Right ventricle myocardium superior (tissue), 1 donor: ENCODE measurements at regions of chr3 and their contacts with region 1.

Region 1: DNA sequence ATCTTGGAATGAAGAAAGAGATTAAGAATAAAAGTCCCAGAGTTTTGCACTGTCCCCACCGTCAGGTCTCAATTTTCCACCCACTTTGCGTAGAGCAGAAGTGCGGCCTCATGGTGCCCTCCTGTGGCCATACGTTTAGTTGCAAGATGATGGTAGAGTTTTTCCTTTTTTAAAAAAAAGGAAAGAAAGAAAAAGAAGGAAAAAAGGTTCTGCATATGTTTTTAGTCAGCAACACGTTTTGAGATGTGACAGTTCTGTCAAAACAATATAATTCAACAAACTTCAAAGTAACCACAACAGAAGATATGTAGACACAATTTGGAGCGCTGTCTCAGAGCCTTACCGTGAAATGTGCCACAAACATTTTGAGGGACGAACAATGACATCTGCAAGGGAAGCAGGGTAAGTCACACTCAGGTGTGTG is 24.6 kb downstream of the EBLN2 start:
- DNase-seq: peak; percentile 55
- ATAC-seq: peak; percentile 79

Region 2: DNA sequence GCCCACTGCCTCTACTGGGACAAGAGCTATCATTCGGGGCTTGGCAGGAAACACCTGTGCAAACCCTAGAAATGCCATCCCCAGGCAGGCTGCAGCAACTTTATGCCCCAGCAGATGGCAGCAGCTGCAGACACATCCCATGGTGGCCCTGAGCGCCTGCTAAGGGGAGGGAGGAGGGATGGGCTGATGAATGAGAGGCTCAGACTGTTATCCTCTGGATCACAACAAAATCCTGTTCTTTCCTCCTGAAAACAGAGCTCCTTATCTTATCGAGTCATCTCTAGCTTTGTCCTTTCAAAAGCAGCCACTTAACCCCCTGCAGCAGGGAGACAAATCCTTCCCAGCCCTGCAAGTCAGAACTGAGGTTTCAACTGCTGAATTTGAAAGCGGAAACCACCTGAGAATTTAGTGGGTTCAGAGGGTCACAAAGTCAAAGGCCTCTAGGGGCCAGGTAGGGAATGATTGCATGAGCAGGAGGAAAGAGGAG is 1210.6 kb before region 1 on chr3:
- intact Hi-C with region 1: loop called (anchors 10 kb)
- DNase-seq: peak; percentile 82
- ATAC-seq: peak; percentile 97

Region 3: DNA sequence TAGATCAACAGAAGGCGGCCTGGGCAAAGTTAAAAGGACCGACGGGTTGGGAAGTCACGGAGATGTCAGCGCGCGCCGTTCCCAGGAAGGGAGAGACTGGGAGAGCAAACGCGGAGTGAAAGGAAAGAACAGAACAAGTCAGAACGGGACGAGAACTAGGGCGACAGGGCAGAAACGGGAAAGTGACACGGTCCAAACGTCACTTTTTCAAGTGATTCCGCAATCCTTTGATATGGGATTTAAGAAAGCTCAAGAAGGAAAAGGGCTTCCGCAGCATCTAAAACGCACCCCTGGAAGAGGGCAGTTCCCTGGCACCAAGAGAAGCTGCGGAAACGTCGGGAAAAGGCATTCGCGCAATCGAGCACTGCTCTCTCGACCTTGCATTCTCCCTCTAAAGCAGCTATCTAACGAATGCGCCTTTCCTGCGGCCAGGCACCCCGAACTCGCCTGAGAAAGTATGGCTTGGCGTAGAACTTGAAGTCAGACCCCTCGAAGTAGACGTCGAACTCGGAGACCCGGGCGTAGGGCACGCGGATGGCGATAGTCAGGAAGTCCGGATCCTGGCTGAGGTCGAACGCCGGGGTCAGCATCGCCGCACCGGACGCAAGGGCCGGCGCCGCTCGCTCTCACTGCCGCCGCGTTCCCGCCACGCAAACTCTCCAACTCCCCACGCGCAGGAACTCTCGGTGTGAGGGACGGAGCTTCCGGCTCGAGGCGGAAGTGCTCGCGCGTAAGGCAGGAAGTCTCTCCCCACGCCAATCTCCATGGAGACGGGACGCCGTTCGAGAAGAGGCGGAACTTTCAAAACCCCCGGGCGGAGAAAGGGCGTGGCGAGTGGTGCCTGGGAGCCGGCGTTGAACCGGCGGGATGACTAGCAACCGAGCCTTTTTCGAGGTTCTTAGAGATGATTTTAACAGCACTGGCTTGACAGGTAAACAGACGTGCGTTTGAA is 238.1 kb before region 1 on chr3 and contains the start of gene SHQ1:
- intact Hi-C with region 1: loop called (anchors 5 kb)
- DNase-seq: peak; percentile 98
- ATAC-seq: peak; percentile 99
- total RNA-seq, gene SHQ1: 15.1 TPM

Region 4: DNA sequence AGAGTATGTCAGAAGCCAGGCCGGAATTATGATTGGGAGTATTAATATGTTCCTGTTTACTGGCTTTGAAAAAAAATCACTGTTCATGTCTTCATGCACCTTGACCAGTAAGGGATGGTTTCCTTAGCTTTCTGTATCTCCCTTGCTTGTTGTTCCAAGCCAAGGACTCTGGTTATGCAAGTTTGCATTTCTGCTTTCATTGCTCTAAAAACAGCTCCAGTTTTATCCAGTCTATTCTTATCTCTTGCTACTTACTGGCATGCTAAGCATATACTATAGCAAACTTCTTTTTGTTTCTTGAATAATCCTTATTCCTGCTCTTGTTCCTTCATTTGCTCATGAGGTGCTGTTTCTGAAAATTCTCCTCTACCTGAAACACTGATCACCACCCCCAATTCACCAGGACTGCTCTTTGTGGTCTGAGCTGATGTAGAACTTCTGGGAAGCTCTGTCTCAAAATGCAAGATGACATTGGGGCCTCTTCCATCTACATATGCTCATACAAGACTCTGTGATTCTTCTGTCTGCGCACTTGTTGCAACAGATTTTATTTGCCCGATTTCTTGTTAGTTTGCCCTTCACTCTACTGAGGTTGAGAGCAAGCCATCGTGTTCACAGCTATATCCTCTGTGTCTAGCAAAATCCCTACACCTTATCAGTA is 148.4 kb after region 1 on chr3:
- intact Hi-C with region 1: no loop called
- DNase-seq: no peak
- ATAC-seq: no peak